ENCODE measurements at regions of chr2 and their contacts with region 1.

Region 1: DNA sequence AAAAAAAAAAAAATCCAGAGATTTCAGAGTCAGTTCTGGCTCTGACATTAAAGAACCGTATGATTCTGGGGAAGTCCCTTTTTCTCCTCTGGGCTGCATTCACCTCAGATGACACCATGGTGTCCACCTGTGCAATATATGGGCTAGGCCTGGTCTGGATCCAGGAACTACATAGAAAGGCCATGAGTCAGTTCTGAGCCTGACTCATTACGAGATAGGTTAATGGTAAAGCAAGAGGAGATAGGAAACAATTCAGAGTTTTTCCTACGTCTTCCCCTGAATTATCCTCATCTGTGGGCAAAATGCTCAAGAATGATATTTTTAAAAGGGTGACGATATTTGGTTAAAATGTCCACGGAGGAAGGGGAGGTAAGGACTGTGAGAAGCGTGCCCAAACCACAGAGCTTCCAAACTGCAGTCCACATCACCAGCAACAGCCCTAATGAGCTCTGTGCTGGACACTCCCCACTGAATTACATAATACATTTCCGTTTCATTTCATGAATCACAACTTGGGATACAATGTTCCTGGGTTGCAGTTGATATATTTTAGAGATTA is 180.1 kb upstream of the OSR1 start:
- DNase-seq: peak; percentile 77
- H3K4me3 Mint-ChIP-seq: peak overlapping the region; percentile 51
- H3K27ac Mint-ChIP-seq: peak overlapping the region; percentile 93
- H3K4me1 Mint-ChIP-seq: peaks cover 80% of the 10 kb centered on the region
- H3K27me3 Mint-ChIP-seq: no peaks in the 10 kb centered on the region
- CTCF ChIP-seq: no peak

Region 2: GRCh38 chr2:19488009-19488691 is 50.3 kb before region 1 on chr2:
- CTCF ChIA-PET with region 1: no interaction called
- intact Hi-C with region 1: loop called (anchors 5 kb)
- DNase-seq: peak; percentile 54
- H3K4me3 Mint-ChIP-seq: no peak overlapping the region
- H3K27ac Mint-ChIP-seq: peak overlapping the region; percentile 95
- H3K4me1 Mint-ChIP-seq: peaks cover 31% of the 10 kb centered on the region
- H3K27me3 Mint-ChIP-seq: no peaks in the 10 kb centered on the region
- CTCF ChIP-seq: no peak

Region 3: GRCh38 chr2:19504400-19505198 is 33.9 kb before region 1 on chr2:
- CTCF ChIA-PET with region 1: interaction called, 9 read pairs
- intact Hi-C with region 1: loop called (anchors 1 kb)
- DNase-seq: peak; percentile 39
- H3K4me3 Mint-ChIP-seq: peak overlapping the region; percentile 36
- H3K27ac Mint-ChIP-seq: peak overlapping the region; percentile 59
- H3K4me1 Mint-ChIP-seq: peaks cover 36% of the 10 kb centered on the region
- H3K27me3 Mint-ChIP-seq: no peaks in the 10 kb centered on the region
- CTCF ChIP-seq: no peak

Region 4: DNA sequence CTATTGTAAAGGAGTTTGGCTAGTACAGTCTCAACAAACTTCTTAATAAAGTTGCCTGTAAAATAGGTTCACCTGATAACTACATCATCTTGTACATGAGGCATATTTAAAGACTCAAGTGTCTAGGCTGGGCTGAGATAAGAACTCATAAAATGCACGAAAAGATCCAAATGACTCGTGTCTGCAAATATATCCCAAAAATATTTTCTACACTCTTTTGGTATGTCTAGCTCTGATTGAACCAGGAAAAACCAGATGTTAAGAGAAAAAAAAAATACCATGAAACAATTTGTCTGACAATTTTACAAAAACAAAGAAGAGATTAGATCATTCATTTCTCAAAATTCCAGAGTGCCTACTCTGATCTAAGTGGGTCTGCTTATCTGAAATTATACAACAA is 13.2 kb before region 1 on chr2:
- CTCF ChIA-PET with region 1: no interaction called
- intact Hi-C with region 1: no loop called
- DNase-seq: no peak
- H3K4me3 Mint-ChIP-seq: no peak overlapping the region
- H3K27ac Mint-ChIP-seq: no peak overlapping the region
- H3K4me1 Mint-ChIP-seq: no peaks in the 10 kb centered on the region
- H3K27me3 Mint-ChIP-seq: no peaks in the 10 kb centered on the region
- CTCF ChIP-seq: no peak

Region 5: GRCh38 chr2:19617257-19617848 is 78.9 kb after region 1 on chr2:
- CTCF ChIA-PET with region 1: no interaction called
- intact Hi-C with region 1: loop called (anchors 5 kb)
- DNase-seq: peak; percentile 42
- H3K4me3 Mint-ChIP-seq: peak overlapping the region; percentile 4
- H3K27ac Mint-ChIP-seq: peak overlapping the region; percentile 88
- H3K4me1 Mint-ChIP-seq: peaks cover 27% of the 10 kb centered on the region
- H3K27me3 Mint-ChIP-seq: no peaks in the 10 kb centered on the region
- CTCF ChIP-seq: no peak

Region 6: DNA sequence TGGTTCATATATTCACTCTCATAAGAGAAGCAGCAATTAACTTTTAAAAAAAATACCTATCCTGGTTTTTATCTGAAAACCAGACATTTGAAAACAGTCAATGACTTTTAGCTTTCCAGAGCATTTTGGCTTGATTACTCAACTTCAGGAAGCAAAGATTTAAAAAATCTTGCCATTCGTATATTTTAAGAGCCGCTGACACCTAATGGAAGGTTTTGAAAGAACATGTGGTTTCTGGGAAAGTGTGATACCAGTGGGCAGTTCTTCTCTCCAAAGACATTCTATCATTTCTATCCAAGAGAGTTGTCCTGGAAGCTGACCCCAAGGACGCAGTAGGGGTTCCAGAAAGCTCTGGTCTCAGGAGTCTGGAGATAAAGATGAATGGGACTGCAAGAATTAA is 128.6 kb after region 1 on chr2:
- CTCF ChIA-PET with region 1: no interaction called
- intact Hi-C with region 1: loop called (anchors 2 kb)
- DNase-seq: no peak
- H3K4me3 Mint-ChIP-seq: no peak overlapping the region
- H3K27ac Mint-ChIP-seq: no peak overlapping the region
- H3K4me1 Mint-ChIP-seq: peaks cover 25% of the 10 kb centered on the region
- H3K27me3 Mint-ChIP-seq: no peaks in the 10 kb centered on the region
- CTCF ChIP-seq: no peak

Region 7: GRCh38 chr2:19801367-19802080 is 263.0 kb after region 1 on chr2:
- CTCF ChIA-PET with region 1: no interaction called
- intact Hi-C with region 1: loop called (anchors 5 kb)
- DNase-seq: peak; percentile 94
- H3K4me3 Mint-ChIP-seq: no peak overlapping the region
- H3K27ac Mint-ChIP-seq: peak overlapping the region; percentile 59
- H3K4me1 Mint-ChIP-seq: peaks cover 27% of the 10 kb centered on the region
- H3K27me3 Mint-ChIP-seq: peaks cover 9% of the 10 kb centered on the region
- CTCF ChIP-seq: no peak

Measured in Calu3 (cell line).